ENCODE measurements at regions of chr1 and their contacts with region 1.

Region 1: DNA sequence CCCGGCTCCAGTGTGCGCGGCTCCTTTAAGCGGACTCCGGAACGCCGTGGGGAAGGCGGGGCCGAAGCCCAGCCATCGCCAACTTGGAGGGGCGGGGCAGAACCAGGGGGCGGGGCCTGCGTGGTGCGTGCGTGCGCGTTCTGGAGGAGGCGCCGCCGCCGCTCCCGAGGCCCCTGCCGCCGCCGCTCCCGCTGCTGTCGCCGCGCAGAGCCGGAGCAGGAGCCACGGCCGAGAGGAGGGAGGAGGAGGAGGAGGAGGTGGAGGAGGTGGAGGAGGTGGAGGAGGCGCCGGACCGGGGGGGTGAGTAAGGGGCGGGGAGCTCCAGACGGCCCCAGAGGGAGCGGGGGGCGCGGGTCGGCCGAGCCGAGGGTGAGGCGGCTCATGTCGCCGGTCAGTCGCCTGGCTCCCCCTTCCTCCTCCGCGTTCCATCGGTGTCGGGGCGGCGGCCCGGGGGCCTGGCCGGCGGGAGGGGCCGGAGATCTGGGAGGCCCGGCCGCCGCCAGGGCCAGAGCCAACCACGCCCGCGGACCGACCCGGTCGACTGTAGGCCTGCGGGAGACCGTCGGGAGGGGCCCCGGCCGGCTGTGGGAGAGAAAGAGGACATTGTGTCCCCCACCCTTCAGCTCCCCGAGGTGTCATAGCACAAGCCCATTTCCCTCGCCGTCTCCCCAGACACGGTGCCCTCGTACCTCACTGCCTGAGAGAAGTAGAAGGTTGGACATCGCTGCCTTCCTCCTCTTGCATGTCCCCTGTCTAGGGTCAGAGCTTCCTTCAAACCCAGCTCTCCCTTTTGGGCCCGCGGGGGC is at the start of gene RAP1A:
- DNase-seq: peak; percentile 96
- ATAC-seq: peak; percentile 98
- total RNA-seq, gene RAP1A: 84.2 to 103 TPM

Region 2: GRCh38 chr1:111422566-111423391 is 197.1 kb before region 1 on chr1:
- intact Hi-C with region 1: no loop called
- DNase-seq: no peak
- ATAC-seq: no peak

Region 3: DNA sequence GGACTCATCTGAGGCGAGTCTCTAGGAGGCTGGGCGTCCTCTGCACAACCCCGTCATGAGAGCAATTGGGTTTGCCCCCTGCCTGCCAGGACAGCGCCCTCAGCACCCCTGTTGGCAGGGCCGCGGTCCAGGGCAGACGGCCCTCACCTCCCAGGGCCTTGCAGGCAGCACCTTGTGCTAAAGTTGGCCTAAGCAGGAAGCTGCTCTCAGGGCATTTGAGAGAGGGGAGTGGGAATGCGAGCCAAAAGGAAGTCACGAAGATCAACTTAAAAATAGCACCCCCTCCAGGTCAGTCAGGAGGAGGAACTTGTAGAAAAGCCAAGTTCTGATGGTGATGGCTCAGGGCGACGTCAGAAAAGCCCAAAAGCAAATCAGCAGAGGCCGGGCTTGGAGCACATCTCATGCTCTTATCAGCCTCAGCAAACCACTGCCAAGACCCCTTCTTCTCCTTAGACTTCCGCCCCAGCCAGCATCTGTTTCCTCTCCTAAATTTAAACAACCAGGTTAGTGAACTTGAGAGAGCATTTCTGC is 103.8 kb before region 1 on chr1:
- intact Hi-C with region 1: loop called in 1 of 2 experiments (anchors 10 kb)
- DNase-seq: peak; percentile 83
- ATAC-seq: peak; percentile 74 to 76

Region 4: GRCh38 chr1:111576537-111576936 is 43.3 kb before region 1 on chr1:
- intact Hi-C with region 1: no loop called
- DNase-seq: no peak
- ATAC-seq: no peak

Region 5: DNA sequence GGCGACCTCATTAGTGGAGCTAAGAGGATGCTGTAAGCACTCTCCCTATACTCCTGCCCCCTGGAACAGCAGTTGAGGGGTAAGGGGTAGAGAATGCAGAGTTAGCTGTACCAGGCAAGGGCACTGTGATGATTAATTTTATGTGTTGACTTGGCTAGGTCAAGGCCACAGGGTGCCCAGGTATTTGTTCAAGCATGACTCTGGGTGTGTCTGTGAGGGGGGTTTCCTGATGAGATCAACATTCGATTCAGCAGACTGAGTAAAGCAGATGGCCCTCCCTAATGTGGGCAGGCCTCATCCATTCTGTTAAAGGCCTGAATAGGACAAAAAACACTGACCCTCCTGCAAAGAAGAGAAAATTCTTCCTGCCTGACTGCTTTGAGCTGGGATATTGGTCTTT is 258.8 kb after region 1 on chr1:
- intact Hi-C with region 1: no loop called
- DNase-seq: no peak
- ATAC-seq: no peak